Endothelial cell of umbilical vein (primary cell): ENCODE measurements at regions of chr14 and their contacts with region 1.

Region 1: GRCh38 chr14:104895786-104896661 is 28.7 kb upstream of the PLD4 start:
- DNase-seq: no peak
- H3K4me3 ChIP-seq: no peak overlapping the region
- H3K27ac ChIP-seq: no peak overlapping the region
- H3K4me1 ChIP-seq: peaks cover 16% of the 10 kb centered on the region
- H3K27me3 ChIP-seq: no peaks in the 10 kb centered on the region
- CTCF ChIP-seq: no peak
- POLR2A ChIP-seq: no peak

Region 2: GRCh38 chr14:104931304-104932240 is 35.5 kb after region 1 on chr14:
- CTCF ChIA-PET with region 1: no interaction called
- POLR2A ChIA-PET with region 1: no interaction called
- dilution Hi-C with region 1: no loop called
- intact Hi-C with region 1: no loop called
- DNase-seq: no peak
- H3K4me3 ChIP-seq: no peak overlapping the region
- H3K27ac ChIP-seq: no peak overlapping the region
- H3K4me1 ChIP-seq: peaks cover 6% of the 10 kb centered on the region
- H3K27me3 ChIP-seq: peaks cover 3 to 11% of the 10 kb centered on the region in 2 experiments
- CTCF ChIP-seq: no peak
- POLR2A ChIP-seq: no peak

Region 3: DNA sequence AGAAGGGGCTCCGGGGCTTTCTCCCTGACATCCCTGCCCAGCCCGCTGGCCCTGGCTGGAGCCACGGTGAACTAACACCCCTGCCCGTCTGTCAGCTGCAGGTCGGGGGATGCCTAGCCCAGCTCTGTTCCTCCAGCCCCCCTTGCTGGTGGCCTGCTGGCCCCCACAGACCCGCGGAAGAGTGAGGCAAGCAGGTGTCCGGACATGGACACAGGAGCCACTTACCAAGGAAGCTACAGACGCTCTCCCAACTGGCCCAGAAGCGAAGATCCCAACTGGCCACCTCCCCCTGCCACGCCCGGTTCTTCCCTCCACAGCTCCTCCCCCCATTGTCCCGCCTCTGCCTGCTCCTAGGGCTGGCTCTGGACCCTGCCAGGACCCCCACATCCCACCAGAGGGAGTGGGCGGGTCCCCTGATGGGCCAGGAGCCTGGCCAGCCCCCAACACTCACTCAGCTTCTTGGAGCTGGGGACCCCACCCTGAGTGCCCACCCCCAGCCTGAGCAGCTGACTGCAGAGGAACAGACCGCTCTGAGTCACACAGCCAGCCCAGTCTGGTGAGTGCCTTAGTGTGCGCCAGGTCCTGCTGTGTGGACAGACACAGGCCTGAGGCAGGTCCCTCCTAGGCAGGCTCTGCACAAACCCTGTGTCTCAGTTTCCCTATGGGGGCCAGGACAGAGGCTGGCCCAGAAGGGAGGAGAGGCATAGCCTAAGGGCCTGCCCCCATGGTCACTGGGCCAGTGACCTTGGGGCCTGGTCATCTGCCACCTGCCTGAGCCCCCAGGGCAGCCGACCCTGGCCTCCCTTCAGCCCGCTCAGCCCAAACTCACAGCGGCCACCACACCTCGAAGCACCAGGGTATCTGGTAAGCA is 74.4 kb after region 1 on chr14:
- CTCF ChIA-PET with region 1: interaction called, 14 read pairs
- POLR2A ChIA-PET with region 1: no interaction called
- dilution Hi-C with region 1: no loop called
- intact Hi-C with region 1: loop called (anchors 1 kb)
- DNase-seq: peak; percentile 87
- H3K4me3 ChIP-seq: peak overlapping the region; percentile 24 to 59 (median 41)
- H3K27ac ChIP-seq: peak overlapping the region; percentile 89
- H3K4me1 ChIP-seq: peaks cover 79% of the 10 kb centered on the region
- H3K27me3 ChIP-seq: no peaks in the 10 kb centered on the region
- CTCF ChIP-seq: no peak
- POLR2A ChIP-seq: peak; percentile 74

Region 4: DNA sequence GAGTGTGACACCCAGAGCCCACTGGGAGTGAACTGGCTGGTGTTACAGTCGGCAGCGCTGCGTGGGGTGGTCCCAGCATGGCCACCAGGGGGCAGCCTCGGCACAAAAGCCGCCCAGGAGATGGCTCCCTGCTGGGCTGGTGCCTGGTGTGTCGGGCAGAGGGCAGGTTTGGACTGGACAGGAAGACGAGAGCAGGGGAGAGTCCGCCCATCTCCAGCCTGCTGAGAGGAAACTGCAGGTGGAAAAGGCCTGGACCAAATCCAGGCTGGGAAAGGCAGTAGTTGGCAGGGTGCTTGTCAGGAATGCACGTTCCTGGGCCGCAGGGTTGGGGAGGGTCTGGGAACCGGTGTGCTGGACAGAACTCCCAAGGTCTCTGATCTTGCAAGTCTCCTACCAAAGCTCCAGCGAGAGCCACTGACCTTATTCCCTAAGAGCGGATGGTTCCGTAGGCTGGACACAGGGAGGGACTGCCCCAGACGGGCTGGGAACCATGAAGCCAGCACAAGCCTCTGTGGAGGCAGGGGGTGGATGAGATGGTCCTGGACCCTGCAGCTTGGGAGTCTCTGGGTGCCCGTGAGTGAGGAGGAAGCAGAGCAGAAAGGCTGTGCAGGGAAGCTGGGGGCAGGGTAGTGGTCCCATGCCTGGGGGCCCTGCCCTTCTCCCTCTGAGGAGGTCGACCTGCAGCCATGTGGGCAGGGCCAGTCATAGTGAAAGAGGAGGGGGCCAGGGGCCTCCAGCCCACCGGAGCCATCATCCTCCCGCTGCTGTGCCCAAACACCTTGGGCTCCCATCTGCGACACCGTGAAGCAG is 80.4 kb after region 1 on chr14:
- CTCF ChIA-PET with region 1: interaction called, 4 read pairs
- POLR2A ChIA-PET with region 1: no interaction called
- dilution Hi-C with region 1: no loop called
- intact Hi-C with region 1: loop called (anchors 1 kb)
- DNase-seq: peak; percentile 74
- H3K4me3 ChIP-seq: no peak overlapping the region
- H3K27ac ChIP-seq: no peak overlapping the region
- H3K4me1 ChIP-seq: peaks cover 39% of the 10 kb centered on the region
- H3K27me3 ChIP-seq: no peaks in the 10 kb centered on the region
- CTCF ChIP-seq: peak; percentile 90 to 98
- POLR2A ChIP-seq: no peak